ENCODE measurements at regions of chr7 and their contacts with region 1.

Region 1: GRCh38 chr7:118153551-118154177 is 30.3 kb upstream of the LSM8 start:
- DNase-seq: no peak
- H3K4me3 Mint-ChIP-seq: no peak overlapping the region
- H3K27ac Mint-ChIP-seq: no peak overlapping the region
- H3K4me1 Mint-ChIP-seq: no peaks in the 10 kb centered on the region
- H3K27me3 Mint-ChIP-seq: peaks cover 18% of the 10 kb centered on the region

Region 2: DNA sequence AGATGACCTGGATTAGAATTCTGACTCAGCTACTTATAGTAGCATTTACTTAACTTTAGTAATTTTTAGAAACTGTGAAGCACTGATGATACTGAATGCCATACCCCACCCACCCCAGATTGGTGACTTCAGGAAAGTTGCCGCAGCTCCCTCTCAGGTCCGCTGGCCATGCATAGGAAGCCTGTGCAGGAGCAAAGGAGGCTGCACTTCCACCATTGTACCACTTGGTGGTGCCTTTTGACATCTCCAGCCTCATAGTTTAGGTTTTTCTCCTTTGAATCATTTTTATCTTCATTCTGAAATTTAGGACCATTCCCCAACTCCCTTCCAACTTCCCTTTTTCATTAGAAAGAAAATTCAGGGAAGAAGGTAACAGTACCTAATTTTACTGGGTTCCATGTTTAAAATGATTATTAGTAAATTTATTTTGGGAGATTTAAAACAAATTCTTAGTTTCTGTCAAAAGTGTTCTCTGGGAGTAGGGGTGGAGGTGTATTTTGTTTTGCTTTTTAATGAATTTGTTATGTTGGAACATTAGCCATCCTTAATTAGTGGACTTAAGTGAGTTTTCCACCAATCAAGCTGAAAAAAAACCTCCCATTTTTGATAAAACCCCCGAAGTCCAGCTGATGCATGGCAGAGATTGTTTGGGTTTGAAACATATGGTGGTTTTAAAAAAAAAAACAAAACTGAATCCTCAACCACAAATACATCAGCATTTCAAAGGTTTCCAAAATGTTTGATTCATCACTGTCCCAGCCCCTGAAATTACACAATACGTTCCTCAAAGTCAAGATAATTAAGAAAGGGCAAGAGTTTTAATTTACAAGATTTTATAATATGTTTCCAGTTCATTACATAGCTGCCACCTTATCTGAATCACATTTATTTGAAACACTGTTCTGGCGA is 940.4 kb before region 1 on chr7:
- CTCF ChIA-PET with region 1: interaction called, 3 read pairs
- POLR2A ChIA-PET with region 1: no interaction called
- intact Hi-C with region 1: loop called (anchors 5 kb)
- DNase-seq: peak; percentile 59
- H3K4me3 Mint-ChIP-seq: no peak overlapping the region
- H3K27ac Mint-ChIP-seq: no peak overlapping the region
- H3K4me1 Mint-ChIP-seq: no peaks in the 10 kb centered on the region
- H3K27me3 Mint-ChIP-seq: no peaks in the 10 kb centered on the region

Region 3: DNA sequence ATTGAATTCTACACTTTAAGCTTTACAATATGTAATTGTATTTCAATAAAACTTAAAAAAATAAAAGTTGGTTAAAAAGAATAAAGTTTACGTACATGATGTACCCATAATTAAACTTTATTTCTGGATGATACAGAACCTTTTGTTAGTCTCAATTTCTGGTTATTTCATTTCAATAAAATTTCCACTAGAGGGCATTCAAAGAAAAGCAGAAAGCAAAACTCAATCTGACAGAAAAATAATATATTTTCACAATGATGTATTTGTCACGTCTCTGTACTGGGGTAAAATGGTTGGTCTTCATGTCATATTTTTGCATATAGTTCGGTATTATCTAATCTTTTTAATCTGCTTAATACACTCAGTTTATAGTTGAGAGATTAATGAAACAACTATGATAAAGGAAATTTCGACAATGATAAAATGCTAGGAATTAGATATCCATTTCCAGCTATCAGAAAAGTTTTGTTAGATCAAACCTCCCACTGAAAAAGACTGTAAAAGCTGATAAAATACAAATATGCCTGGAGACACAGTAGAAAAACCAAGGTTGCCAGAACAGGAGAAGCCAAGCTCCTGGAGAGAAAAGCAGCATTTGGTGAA is 753.7 kb before region 1 on chr7:
- CTCF ChIA-PET with region 1: interaction called, 3 read pairs
- POLR2A ChIA-PET with region 1: no interaction called
- intact Hi-C with region 1: loop called (anchors 2 kb)
- DNase-seq: no peak
- H3K4me3 Mint-ChIP-seq: no peak overlapping the region
- H3K27ac Mint-ChIP-seq: no peak overlapping the region
- H3K4me1 Mint-ChIP-seq: no peaks in the 10 kb centered on the region
- H3K27me3 Mint-ChIP-seq: no peaks in the 10 kb centered on the region

Region 4: DNA sequence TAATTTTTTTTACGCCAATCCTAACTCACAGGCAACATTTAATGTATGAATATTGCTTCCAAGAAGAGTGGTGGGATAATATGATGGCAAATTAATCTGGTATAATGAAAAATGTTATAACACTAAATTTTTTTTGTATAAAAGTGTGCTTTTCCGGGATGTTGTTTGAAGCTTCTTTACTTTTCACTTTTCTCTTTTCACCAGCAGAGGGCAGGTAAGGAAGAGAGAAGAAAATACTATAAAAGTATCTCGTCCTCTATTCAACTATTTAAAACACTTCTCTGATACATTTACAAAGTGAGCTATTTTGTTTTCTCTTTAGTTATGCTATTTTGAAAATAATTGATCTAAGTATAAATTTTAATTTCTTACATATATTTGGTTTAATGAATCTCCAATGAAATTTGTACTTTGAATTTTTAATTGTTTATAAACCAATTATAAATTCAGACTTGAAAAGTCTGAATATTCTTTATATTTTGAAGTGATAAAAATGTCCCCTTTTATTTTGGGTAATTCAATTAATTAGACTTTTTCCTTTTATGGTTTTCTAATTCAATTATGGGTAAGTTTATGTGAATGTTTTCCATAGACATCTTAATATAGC is 694.6 kb before region 1 on chr7:
- CTCF ChIA-PET with region 1: interaction called, 3 read pairs
- POLR2A ChIA-PET with region 1: no interaction called
- intact Hi-C with region 1: loop called (anchors 2 kb)
- DNase-seq: no peak
- H3K4me3 Mint-ChIP-seq: no peak overlapping the region
- H3K27ac Mint-ChIP-seq: no peak overlapping the region
- H3K4me1 Mint-ChIP-seq: no peaks in the 10 kb centered on the region
- H3K27me3 Mint-ChIP-seq: no peaks in the 10 kb centered on the region

Region 5: DNA sequence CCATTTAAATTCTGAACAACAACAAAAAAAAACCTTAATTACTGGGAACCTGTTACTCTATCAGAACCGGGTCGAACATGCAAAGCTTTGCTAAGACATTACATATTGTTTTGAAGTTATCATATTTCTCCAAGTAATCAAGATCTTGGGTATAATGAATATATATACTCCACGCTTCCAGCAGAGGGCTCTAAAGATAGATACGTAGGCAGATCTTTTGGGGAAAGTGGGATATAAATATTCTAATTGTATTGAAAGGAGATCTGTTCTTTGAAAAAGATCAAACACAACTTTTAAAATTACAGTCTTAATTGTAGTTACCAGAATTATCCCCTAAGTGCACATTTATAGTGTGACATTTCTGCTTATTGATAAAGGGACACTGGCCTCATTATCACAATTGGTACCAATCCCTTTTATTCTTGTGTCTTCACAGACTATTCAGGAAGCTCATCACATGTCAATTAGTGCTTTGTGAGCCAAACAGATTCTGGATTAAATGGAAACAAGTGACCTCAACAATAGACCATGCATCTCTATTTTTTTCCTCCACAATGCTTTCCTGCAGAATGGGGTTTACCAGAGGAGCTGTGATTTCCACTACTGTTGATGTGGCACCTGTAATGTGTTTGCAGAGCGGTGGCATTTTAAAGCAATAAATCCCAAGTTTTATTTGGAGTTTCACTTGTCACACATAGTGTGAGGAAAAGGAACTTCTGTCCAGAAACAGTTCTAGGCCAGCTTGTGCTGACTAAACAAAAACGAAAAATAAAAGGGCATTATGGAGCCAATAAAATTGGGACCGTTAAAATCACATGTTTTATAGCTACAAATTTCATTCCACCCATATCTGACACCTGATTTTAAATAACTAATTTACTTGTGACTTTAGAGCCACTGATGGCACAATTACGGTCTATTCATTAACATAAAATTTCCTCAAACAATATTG is 402.8 kb before region 1 on chr7:
- CTCF ChIA-PET with region 1: interaction called, 3 read pairs
- POLR2A ChIA-PET with region 1: no interaction called
- intact Hi-C with region 1: loop called (anchors 1 kb)
- DNase-seq: no peak
- H3K4me3 Mint-ChIP-seq: no peak overlapping the region
- H3K27ac Mint-ChIP-seq: no peak overlapping the region
- H3K4me1 Mint-ChIP-seq: no peaks in the 10 kb centered on the region
- H3K27me3 Mint-ChIP-seq: no peaks in the 10 kb centered on the region

Region 6: GRCh38 chr7:118324790-118325449 is 171.3 kb after region 1 on chr7:
- CTCF ChIA-PET with region 1: no interaction called
- POLR2A ChIA-PET with region 1: no interaction called
- intact Hi-C with region 1: no loop called
- DNase-seq: no peak
- H3K4me3 Mint-ChIP-seq: no peak overlapping the region
- H3K27ac Mint-ChIP-seq: no peak overlapping the region
- H3K4me1 Mint-ChIP-seq: no peaks in the 10 kb centered on the region
- H3K27me3 Mint-ChIP-seq: peaks cover 6% of the 10 kb centered on the region